AG04450 (cell line): ENCODE measurements at regions of chr1 and their contacts with region 1.

Region 1: GRCh38 chr1:171715813-171716251 is 26.0 kb downstream of the VAMP4 start:
- DNase-seq: no peak
- H3K4me3 ChIP-seq: no peak overlapping the region
- H3K27ac ChIP-seq: no peak overlapping the region
- H3K27me3 ChIP-seq: no peaks in the 10 kb centered on the region
- CTCF ChIP-seq: peak; percentile 50

Region 2: GRCh38 chr1:171251042-171251951 is 464.5 kb before region 1 on chr1:
- CTCF ChIA-PET with region 1: no interaction called
- POLR2A ChIA-PET with region 1: interaction called, 10 read pairs
- DNase-seq: no peak
- H3K4me3 ChIP-seq: peak overlapping the region; percentile 87
- H3K27ac ChIP-seq: no peak overlapping the region
- H3K27me3 ChIP-seq: no peaks in the 10 kb centered on the region
- CTCF ChIP-seq: peak; percentile 77

Region 3: GRCh38 chr1:171372456-171373084 is 343.3 kb before region 1 on chr1:
- CTCF ChIA-PET with region 1: no interaction called
- POLR2A ChIA-PET with region 1: no interaction called
- DNase-seq: no peak
- H3K4me3 ChIP-seq: no peak overlapping the region
- H3K27ac ChIP-seq: no peak overlapping the region
- H3K27me3 ChIP-seq: no peaks in the 10 kb centered on the region
- CTCF ChIP-seq: no peak

Region 4: GRCh38 chr1:171485375-171486047 is 230.3 kb before region 1 on chr1 and contains the start of gene PRRC2C:
- CTCF ChIA-PET with region 1: interaction called, 13 read pairs
- POLR2A ChIA-PET with region 1: interaction called, 3 read pairs
- DNase-seq: peak; percentile 97
- H3K4me3 ChIP-seq: peak within 1 kb of the TSS; percentile 96
- H3K27ac ChIP-seq: peak within 1 kb of the TSS; percentile 100
- H3K27me3 ChIP-seq: no peaks in the 10 kb centered on the region
- CTCF ChIP-seq: peak; percentile 78
- polyA plus RNA-seq, gene PRRC2C: 66.4 and 80.0 TPM in 2 replicates

Region 5: DNA sequence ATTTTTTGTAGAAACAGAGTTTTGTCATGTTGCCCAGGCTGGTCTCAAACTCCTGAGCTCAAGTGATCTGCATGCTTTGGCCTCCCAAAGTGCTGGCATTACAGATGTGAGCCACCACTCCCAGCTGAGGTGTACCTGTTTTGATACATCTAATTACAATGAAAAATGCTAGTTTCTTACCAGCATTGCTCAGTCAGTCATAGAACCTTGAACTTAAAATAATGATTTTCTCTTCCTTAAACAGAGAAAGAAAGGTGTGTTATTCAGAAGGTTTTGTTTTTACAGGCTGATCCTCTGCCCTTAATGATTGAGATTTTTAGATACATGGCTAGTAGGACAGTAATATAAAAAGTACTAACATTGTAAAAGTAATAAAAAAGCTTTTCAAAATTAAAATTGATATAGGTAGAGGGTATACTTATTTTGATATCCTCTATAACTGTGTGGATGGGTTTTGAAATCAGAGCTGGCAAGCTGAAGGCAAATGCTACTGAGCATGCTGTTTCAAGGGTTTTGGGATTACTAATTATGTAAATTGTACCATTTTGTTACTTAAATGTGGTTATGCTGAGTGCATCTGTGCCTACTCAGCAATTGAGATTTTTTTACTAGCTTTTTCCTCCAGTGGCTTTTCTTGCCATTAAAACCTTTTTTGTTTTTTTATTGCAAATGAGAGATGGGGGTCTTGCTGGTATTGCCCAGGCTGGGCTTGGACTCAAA is 214.4 kb before region 1 on chr1:
- CTCF ChIA-PET with region 1: no interaction called
- POLR2A ChIA-PET with region 1: no interaction called
- DNase-seq: no peak
- H3K4me3 ChIP-seq: no peak overlapping the region
- H3K27ac ChIP-seq: no peak overlapping the region
- H3K27me3 ChIP-seq: no peaks in the 10 kb centered on the region
- CTCF ChIP-seq: no peak

Region 6: DNA sequence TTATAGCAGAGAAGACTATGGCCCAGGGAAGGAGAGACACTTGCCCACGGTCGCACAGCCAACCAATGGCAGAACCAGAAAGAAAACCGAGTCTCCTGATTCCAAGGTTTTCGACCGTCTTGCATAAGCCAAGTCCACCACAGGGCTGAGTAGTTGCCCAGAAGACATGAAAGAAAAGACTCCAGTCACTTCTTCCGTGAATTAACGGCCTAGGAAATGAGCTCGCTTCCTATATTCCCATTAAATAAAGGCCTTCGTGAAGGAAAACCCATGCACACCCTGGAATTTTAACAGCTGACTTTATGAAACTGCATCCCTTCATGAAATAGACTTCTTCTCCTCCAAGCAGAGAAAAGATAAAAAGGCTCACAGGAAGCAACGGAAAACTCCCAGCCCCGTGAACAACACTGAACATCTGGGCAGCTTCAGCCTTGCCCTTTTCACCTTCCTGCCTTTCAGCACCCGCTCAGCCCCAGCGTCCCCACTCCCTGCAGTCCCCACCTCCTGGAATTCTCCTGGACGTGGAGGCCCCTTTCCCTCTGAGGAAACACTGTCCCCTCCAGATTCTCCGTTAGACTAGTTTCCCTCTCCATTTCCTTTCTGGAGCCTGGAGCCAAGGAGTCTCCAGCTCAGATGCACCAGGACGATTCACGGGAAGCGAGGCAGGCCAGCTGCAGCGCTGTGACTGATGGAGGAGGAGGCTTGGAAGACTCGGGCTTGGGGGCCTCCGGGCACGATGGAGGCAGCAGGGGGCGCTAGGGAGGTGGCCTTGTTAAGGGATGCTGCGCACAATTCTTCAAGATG is 60.7 kb before region 1 on chr1:
- CTCF ChIA-PET with region 1: interaction called, 22 read pairs
- POLR2A ChIA-PET with region 1: no interaction called
- DNase-seq: no peak
- H3K4me3 ChIP-seq: no peak overlapping the region
- H3K27ac ChIP-seq: no peak overlapping the region
- H3K27me3 ChIP-seq: no peaks in the 10 kb centered on the region
- CTCF ChIP-seq: peak; percentile 66

Region 7: GRCh38 chr1:171699531-171699930 is 16.3 kb before region 1 on chr1:
- CTCF ChIA-PET with region 1: interaction called, 10 read pairs
- POLR2A ChIA-PET with region 1: no interaction called
- DNase-seq: no peak
- H3K4me3 ChIP-seq: no peak overlapping the region
- H3K27ac ChIP-seq: no peak overlapping the region
- H3K27me3 ChIP-seq: no peaks in the 10 kb centered on the region
- CTCF ChIP-seq: no peak

Region 8: DNA sequence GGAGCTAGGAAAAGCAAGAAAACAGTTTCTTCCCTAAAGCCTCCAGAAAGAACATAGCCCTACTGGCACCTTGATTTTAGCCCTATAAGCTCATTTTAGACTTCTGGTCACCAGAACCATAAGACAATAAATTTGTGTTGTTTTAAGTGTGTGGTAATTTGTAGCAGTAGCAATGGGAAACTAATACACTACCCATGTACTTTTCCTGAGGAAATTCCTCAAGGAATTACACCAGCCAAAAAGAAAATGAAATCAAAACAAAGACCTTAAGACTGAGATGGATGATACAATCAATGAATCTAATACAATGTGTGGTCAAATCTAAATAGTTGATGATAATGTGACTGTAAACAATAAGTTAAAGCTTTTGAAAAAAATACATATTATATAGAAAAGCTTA is 14.2 kb after region 1 on chr1:
- CTCF ChIA-PET with region 1: interaction called, 15 read pairs
- POLR2A ChIA-PET with region 1: no interaction called
- DNase-seq: no peak
- H3K4me3 ChIP-seq: no peak overlapping the region
- H3K27ac ChIP-seq: no peak overlapping the region
- H3K27me3 ChIP-seq: no peaks in the 10 kb centered on the region
- CTCF ChIP-seq: no peak

Region 9: GRCh38 chr1:171741872-171742576 is 26.2 kb after region 1 on chr1 and contains the start of gene VAMP4:
- CTCF ChIA-PET with region 1: interaction called, 41 read pairs
- POLR2A ChIA-PET with region 1: interaction called, 7 read pairs
- DNase-seq: no peak
- H3K4me3 ChIP-seq: peak within 1 kb of the TSS; percentile 90
- H3K27ac ChIP-seq: peak within 1 kb of the TSS; percentile 95
- H3K27me3 ChIP-seq: no peaks in the 10 kb centered on the region
- CTCF ChIP-seq: no peak
- polyA plus RNA-seq, gene VAMP4: 13.0 and 20.8 TPM in 2 replicates